ENCODE measurements at regions of chr4 and their contacts with region 1.

Region 1: GRCh38 chr4:15956179-15956850 is 6.7 kb downstream of the FGFBP2 start:
- DNase-seq: peak in 1 of 2 experiments; percentile 92
- H3K4me3 ChIP-seq: no peak overlapping the region
- H3K27ac ChIP-seq: no peak overlapping the region
- H3K4me1 ChIP-seq: peaks cover 0 to 4% (median under 1%) of the 10 kb centered on the region in 4 experiments; a peak in 2 of 7 replicates
- H3K27me3 ChIP-seq: no peaks in the 10 kb centered on the region
- CTCF ChIP-seq: peak; percentile 74 to 98 (median 97)
- EP300 ChIP-seq: no peak
- POLR2A ChIP-seq: no peak
- RAD21 ChIP-seq: peak; percentile 99

Region 2: GRCh38 chr4:15906024-15906443 is 50.3 kb before region 1 on chr4:
- CTCF ChIA-PET with region 1: interaction called, 11 read pairs
- POLR2A ChIA-PET with region 1: no interaction called
- DNase-seq: peak; percentile 79 to 80
- H3K4me3 ChIP-seq: peak overlapping the region; percentile 6 to 55 (median 30); a peak in 6 of 8 replicates
- H3K27ac ChIP-seq: no peak overlapping the region; the same call in 1 of the 2 replicates
- H3K4me1 ChIP-seq: peaks cover 0 to 2% (median 0%) of the 10 kb centered on the region in 4 experiments; a peak in 1 of 7 replicates
- H3K27me3 ChIP-seq: no peaks in the 10 kb centered on the region
- CTCF ChIP-seq: peak in 1 of 3 experiments; percentile 0; a peak in 1 of 4 replicates
- EP300 ChIP-seq: no peak
- POLR2A ChIP-seq: 0 out of 3 replicates have a peak, but pooled peaks of 1 of the 2 experiments have one; percentile 22
- RAD21 ChIP-seq: no peak

Region 3: DNA sequence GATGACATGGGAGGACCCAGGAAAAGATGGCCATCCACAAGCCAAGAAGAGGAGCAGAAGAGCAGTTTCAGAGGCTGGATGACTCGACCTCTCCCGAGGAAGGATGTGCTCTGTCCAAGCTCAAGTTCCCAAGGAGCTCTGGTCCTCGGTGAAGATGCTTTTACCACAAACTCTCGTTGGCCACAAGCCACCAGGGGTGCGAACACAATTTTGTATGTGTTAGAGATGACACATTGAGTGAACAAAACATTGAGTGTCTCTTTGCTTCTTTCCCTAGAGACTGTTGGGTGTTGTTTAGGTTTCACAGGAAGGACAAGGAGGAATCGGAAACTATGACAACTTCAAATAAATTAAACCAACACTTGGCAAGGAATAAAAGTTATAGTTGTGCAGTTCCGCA is 44.1 kb before region 1 on chr4:
- CTCF ChIA-PET with region 1: interaction called, 11 read pairs
- POLR2A ChIA-PET with region 1: no interaction called
- DNase-seq: no peak
- H3K4me3 ChIP-seq: no peak overlapping the region
- H3K27ac ChIP-seq: no peak overlapping the region
- H3K4me1 ChIP-seq: no peaks in the 10 kb centered on the region
- H3K27me3 ChIP-seq: no peaks in the 10 kb centered on the region; a peak in 1 of 7 replicates
- CTCF ChIP-seq: no peak
- EP300 ChIP-seq: no peak
- POLR2A ChIP-seq: no peak
- RAD21 ChIP-seq: no peak

Region 4: GRCh38 chr4:15938182-15938581 is 18.1 kb before region 1 on chr4:
- CTCF ChIA-PET with region 1: interaction called, 11 read pairs
- POLR2A ChIA-PET with region 1: no interaction called
- DNase-seq: peak in 1 of 2 experiments; percentile 54
- H3K4me3 ChIP-seq: no peak overlapping the region
- H3K27ac ChIP-seq: no peak overlapping the region
- H3K4me1 ChIP-seq: peaks cover 0 to 9% (median 3%) of the 10 kb centered on the region in 4 experiments; a peak in 2 of 7 replicates
- H3K27me3 ChIP-seq: no peaks in the 10 kb centered on the region
- CTCF ChIP-seq: no peak
- EP300 ChIP-seq: no peak
- POLR2A ChIP-seq: no peak
- RAD21 ChIP-seq: no peak

Region 5: DNA sequence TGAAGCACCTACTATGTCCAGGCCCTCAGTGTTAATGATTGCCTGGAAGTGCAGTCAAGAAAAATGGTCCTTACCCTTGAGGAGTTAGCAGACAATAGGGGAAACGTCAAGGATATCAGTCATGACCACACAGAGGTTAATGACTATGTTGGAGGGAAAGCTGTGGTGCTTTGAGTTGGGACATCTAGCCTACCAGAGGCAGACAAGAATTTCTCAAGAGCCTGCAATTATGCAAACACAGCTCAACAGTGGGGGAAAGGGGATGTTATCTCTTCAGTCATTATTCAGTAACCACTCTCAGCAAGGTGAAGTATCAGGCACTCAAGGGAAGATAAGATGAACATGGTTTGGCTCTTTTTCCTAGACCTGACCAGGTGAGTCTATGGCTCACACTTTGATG is 10.8 kb before region 1 on chr4:
- CTCF ChIA-PET with region 1: interaction called, 15 read pairs
- POLR2A ChIA-PET with region 1: no interaction called
- DNase-seq: no peak
- H3K4me3 ChIP-seq: no peak overlapping the region
- H3K27ac ChIP-seq: no peak overlapping the region
- H3K4me1 ChIP-seq: no peaks in the 10 kb centered on the region
- H3K27me3 ChIP-seq: no peaks in the 10 kb centered on the region
- CTCF ChIP-seq: no peak
- EP300 ChIP-seq: no peak
- POLR2A ChIP-seq: no peak
- RAD21 ChIP-seq: no peak

Measured in H1 (cell line).